CD8-positive, alpha-beta T cell (primary cell): ENCODE measurements at regions of chr17 and their contacts with region 1.

Region 1: DNA sequence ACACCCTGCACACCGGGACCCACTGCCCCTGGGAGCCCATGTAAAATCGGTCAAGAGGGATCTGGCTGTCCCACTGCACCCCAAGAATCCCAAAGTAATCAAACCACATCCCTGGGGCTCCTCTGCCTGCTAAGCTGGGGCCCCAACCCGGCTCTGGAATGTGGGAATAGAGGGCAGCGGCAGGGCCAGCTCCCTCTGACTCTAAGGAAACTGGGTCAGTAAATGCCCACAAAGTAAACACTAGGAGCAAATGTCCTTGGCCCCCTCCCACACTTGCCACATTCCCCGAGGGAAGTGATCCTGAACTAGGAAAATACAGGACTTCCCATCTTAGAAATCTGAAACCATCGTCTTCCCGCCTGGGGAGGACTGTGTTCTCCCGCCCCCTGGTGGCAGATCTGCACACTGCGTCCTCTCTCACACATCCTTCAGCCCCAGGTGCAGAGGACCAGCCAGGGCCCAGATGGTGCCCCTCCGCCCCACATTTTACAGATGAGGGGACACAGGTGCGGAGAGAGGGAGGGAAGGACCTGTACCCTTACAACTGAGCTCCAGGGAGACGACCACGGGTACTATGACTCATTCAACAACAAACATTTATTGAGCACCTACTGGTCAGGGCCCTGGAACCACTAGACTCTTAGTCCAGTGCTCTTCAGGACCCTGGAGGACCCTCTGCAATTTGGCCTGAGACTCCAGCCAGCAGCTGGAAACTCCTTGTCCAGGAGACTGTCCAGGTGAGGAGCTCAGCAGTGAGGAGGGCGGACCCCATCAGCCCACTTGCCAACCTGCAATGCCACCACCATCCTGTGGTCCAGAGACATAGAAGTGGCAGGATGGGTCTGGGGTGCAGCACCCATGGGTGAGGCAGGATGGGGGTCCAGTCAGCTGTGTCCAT is 10.1 kb downstream of the P3H4 start:
- DNase-seq: peak; percentile 47 to 86 (median 76)
- ATAC-seq: peak; percentile 96
- H3K4me3 ChIP-seq: no peak overlapping the region
- H3K4me3 Mint-ChIP-seq: no peak overlapping the region
- H3K27ac ChIP-seq: no peak overlapping the region
- H3K27ac Mint-ChIP-seq: no peak overlapping the region
- H3K4me1 ChIP-seq: peaks cover 5% of the 10 kb centered on the region
- H3K4me1 Mint-ChIP-seq: peaks cover 4% of the 10 kb centered on the region
- H3K27me3 ChIP-seq: no peaks in the 10 kb centered on the region
- H3K27me3 Mint-ChIP-seq: peaks cover 3% of the 10 kb centered on the region
- CTCF ChIP-seq: peak; percentile 93

Region 2: DNA sequence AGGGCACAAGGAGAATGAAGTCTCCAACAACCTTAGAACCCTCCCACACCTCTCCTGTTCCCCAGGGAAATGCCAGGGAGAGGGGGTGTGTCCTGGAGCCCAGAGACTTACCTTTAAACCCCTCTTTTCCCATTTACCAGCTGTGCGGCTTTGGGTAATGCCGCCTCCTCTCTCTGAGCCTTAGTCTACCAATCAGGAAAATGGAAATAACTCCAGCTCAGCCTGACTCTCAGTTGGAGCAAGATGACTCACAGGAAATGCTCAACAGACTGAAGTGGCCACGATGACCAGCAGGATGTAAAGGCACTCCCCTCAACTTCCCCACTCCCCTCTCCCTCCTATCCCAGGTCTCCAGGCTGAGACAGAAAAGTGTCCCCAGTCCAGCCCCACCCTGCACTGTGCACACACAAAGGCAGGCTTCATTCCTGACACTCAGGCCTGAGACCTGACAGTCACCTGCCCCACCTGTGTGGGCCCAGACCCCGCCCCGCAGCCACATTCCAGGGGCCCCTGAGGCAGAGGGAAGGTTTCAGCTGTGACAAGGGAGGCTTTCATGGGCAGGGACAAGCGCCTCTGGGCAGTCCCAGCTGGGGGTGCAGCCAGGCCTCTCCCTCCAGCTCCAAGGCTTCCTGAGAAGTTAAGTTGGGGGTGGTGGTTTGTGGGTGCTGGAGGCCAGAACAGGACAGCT is 279.9 kb before region 1 on chr17:
- CTCF ChIA-PET with region 1: no interaction called
- POLR2A ChIA-PET with region 1: no interaction called
- intact Hi-C with region 1: no loop called
- DNase-seq: no peak
- ATAC-seq: no peak
- H3K4me3 ChIP-seq: no peak overlapping the region
- H3K4me3 Mint-ChIP-seq: no peak overlapping the region
- H3K27ac ChIP-seq: no peak overlapping the region
- H3K27ac Mint-ChIP-seq: no peak overlapping the region
- H3K4me1 ChIP-seq: no peaks in the 10 kb centered on the region
- H3K4me1 Mint-ChIP-seq: no peaks in the 10 kb centered on the region
- H3K27me3 ChIP-seq: peaks cover 0 to 6% of the 10 kb centered on the region in 2 experiments
- H3K27me3 Mint-ChIP-seq: peaks cover 12% of the 10 kb centered on the region
- CTCF ChIP-seq: no peak

Region 3: DNA sequence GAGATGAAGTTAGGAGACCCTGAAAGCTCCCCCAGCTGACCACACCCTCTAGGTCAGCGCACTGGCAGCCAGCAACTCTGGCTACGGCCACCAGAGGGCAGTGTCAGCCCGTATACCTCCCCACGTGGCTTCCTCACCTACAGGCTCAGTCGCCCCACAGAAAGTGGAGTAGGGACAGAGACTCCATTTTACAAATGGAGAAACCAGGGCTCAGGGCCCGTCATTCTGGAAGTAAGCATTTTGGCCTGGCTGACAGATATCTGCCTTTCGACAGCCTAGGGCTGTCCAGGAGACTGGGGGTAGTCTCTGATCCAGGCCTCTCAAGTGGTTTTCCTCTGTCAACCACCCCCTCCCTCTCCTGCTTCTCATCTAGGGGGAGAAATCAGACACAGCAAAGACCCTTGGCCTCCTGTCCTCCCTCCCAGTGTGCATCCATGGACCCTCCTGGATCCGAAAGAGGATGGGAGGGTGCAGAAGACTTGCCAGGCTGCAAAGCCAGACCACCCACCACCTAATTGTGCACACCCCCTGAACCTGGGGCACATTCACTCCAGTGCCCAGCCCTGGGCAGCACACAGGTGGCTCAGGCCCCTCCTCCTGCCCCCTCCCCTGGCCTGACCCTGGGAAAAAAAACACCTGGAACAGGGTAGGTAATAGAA is 63.4 kb before region 1 on chr17:
- CTCF ChIA-PET with region 1: interaction called, 60 read pairs
- POLR2A ChIA-PET with region 1: no interaction called
- intact Hi-C with region 1: loop called (anchors 1 kb)
- DNase-seq: peak; percentile 57 to 87 (median 77)
- ATAC-seq: peak; percentile 97
- H3K4me3 ChIP-seq: no peak overlapping the region
- H3K4me3 Mint-ChIP-seq: no peak overlapping the region
- H3K27ac ChIP-seq: no peak overlapping the region
- H3K27ac Mint-ChIP-seq: no peak overlapping the region
- H3K4me1 ChIP-seq: peaks cover 10% of the 10 kb centered on the region
- H3K4me1 Mint-ChIP-seq: peaks cover 5% of the 10 kb centered on the region
- H3K27me3 ChIP-seq: peaks cover 9 to 31% of the 10 kb centered on the region in 2 experiments
- H3K27me3 Mint-ChIP-seq: peaks cover 27% of the 10 kb centered on the region
- CTCF ChIP-seq: peak; percentile 98

Region 4: DNA sequence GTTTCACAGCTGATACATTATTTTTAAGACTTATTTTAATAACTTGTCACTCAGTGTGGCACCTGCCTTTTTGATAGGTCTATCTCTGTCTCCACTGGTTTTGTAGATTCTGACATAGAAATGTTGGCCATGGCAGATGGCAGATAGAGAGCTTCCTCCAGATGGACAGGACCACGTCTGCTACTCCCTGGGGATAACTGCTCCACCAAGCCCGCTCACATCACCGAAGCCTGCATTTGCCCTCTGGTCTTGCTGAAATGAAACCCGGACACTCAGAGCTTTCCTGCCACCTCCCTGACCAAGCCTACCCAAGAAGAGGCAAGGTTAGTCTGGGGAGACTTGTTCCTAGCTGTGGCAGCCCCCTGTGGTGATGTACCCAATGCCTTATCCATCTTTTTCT is 50.8 kb before region 1 on chr17:
- CTCF ChIA-PET with region 1: interaction called, 15 read pairs
- POLR2A ChIA-PET with region 1: no interaction called
- intact Hi-C with region 1: no loop called
- DNase-seq: no peak
- ATAC-seq: no peak
- H3K4me3 ChIP-seq: no peak overlapping the region
- H3K4me3 Mint-ChIP-seq: no peak overlapping the region
- H3K27ac ChIP-seq: no peak overlapping the region
- H3K27ac Mint-ChIP-seq: no peak overlapping the region
- H3K4me1 ChIP-seq: no peaks in the 10 kb centered on the region
- H3K4me1 Mint-ChIP-seq: no peaks in the 10 kb centered on the region
- H3K27me3 ChIP-seq: no peaks in the 10 kb centered on the region
- H3K27me3 Mint-ChIP-seq: peaks cover 10% of the 10 kb centered on the region
- CTCF ChIP-seq: no peak

Region 5: GRCh38 chr17:41777574-41778188 is 23.9 kb before region 1 on chr17:
- CTCF ChIA-PET with region 1: interaction called, 11 read pairs
- POLR2A ChIA-PET with region 1: no interaction called
- intact Hi-C with region 1: no loop called
- DNase-seq: no peak
- ATAC-seq: no peak
- H3K4me3 ChIP-seq: no peak overlapping the region
- H3K4me3 Mint-ChIP-seq: no peak overlapping the region
- H3K27ac ChIP-seq: no peak overlapping the region
- H3K27ac Mint-ChIP-seq: no peak overlapping the region
- H3K4me1 ChIP-seq: no peaks in the 10 kb centered on the region
- H3K4me1 Mint-ChIP-seq: no peaks in the 10 kb centered on the region
- H3K27me3 ChIP-seq: peaks cover 0 to 2% of the 10 kb centered on the region in 2 experiments
- H3K27me3 Mint-ChIP-seq: peaks cover 11% of the 10 kb centered on the region
- CTCF ChIP-seq: no peak

Region 6: DNA sequence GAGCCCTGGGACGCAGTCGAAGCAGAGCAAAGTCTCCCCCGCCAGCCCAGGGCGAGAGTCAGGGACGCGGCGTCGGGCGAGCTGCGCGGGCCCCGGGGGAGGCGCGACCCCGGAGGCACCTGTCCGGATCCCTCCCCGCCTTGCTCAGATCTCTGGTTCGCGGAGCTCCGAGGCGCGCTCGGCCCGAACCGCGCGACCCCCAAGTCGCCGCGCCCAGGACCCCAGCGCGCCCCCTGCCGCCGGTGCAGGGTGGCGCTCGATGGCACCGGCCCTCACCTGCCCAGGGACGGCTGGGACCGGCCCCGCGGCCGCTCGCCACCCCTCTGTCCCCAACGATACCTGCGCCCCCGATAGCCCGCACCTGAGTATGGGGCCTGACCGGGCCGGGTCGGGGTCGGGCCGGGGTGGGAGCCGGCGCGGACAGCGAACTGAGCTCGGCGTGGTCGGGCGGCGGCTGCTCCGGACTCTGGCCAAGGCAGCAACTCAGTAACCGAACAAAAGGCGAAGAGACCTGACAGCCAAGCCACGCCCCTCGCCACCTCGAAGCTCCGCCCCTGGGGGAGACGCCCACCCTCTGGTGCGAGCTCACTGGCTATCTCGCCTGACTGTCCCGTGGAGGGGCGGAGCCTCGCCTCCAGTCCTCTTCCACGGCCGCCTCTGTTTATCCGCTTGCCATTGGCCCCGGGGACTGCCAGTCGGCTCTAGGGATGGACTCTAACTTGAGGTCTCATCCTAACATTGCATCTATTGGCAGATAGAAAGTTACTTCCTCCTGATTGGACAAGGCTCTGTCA is 15.2 kb before region 1 on chr17 and contains the start of gene JUP:
- CTCF ChIA-PET with region 1: interaction called, 21 read pairs
- POLR2A ChIA-PET with region 1: no interaction called
- intact Hi-C with region 1: no loop called
- DNase-seq: peak; percentile 69 to 92 (median 88)
- ATAC-seq: peak; percentile 93
- H3K4me3 ChIP-seq: peak within 1 kb of the TSS; percentile 33 to 49
- H3K4me3 Mint-ChIP-seq: peak within 1 kb of the TSS; percentile 80
- H3K27ac ChIP-seq: no peak within 1 kb of the TSS
- H3K27ac Mint-ChIP-seq: no peak within 1 kb of the TSS
- H3K4me1 ChIP-seq: peaks cover 25% of the 10 kb centered on the region
- H3K4me1 Mint-ChIP-seq: peaks cover 36% of the 10 kb centered on the region
- H3K27me3 ChIP-seq: peaks cover 10 to 26% of the 10 kb centered on the region in 2 experiments
- H3K27me3 Mint-ChIP-seq: peaks cover 32% of the 10 kb centered on the region
- CTCF ChIP-seq: peak; percentile 27
- total RNA-seq, gene JUP: 1.0 to 1.8 TPM

Region 7: GRCh38 chr17:41811549-41812380 is 10.1 kb after region 1 on chr17 and contains the start of gene P3H4:
- CTCF ChIA-PET with region 1: interaction called, 34 read pairs
- POLR2A ChIA-PET with region 1: interaction called, 3 read pairs
- intact Hi-C with region 1: no loop called
- DNase-seq: peak; percentile 51 to 89 (median 75)
- ATAC-seq: peak; percentile 87
- H3K4me3 ChIP-seq: peak within 1 kb of the TSS; percentile 73 to 93
- H3K4me3 Mint-ChIP-seq: peak within 1 kb of the TSS; percentile 93
- H3K27ac ChIP-seq: peak within 1 kb of the TSS in 1 of 2 experiments; percentile 35
- H3K27ac Mint-ChIP-seq: peak within 1 kb of the TSS; percentile 55
- H3K4me1 ChIP-seq: peaks cover 26% of the 10 kb centered on the region
- H3K4me1 Mint-ChIP-seq: peaks cover 23% of the 10 kb centered on the region
- H3K27me3 ChIP-seq: no peaks in the 10 kb centered on the region
- H3K27me3 Mint-ChIP-seq: peaks cover 2% of the 10 kb centered on the region
- CTCF ChIP-seq: peak; percentile 51
- total RNA-seq, gene P3H4: 0.89 to 1.0 TPM

Region 8: DNA sequence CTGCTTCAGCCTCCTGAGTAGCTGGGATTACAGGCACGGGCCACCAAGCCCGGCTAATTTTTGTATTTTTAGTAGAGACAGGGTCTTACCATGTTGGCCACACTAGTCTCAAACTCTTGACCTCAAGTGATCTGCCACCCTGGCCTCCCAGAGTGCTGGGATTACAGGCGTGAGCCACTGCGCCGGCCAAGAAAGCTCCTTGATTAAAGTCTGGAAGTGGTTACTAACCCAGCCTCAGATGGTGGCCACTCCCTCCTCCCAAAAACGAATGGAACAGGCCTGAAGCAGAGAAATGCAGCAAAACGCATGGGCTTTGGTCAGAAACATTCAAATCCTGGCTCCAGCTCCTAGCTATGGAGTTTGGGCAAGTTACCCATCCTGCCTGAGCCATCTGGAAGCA is 22.5 kb after region 1 on chr17:
- CTCF ChIA-PET with region 1: interaction called, 16 read pairs
- POLR2A ChIA-PET with region 1: no interaction called
- intact Hi-C with region 1: no loop called
- DNase-seq: no peak
- ATAC-seq: no peak
- H3K4me3 ChIP-seq: no peak overlapping the region
- H3K4me3 Mint-ChIP-seq: no peak overlapping the region
- H3K27ac ChIP-seq: no peak overlapping the region
- H3K27ac Mint-ChIP-seq: no peak overlapping the region
- H3K4me1 ChIP-seq: no peaks in the 10 kb centered on the region
- H3K4me1 Mint-ChIP-seq: no peaks in the 10 kb centered on the region
- H3K27me3 ChIP-seq: no peaks in the 10 kb centered on the region
- H3K27me3 Mint-ChIP-seq: no peaks in the 10 kb centered on the region
- CTCF ChIP-seq: no peak

Region 9: DNA sequence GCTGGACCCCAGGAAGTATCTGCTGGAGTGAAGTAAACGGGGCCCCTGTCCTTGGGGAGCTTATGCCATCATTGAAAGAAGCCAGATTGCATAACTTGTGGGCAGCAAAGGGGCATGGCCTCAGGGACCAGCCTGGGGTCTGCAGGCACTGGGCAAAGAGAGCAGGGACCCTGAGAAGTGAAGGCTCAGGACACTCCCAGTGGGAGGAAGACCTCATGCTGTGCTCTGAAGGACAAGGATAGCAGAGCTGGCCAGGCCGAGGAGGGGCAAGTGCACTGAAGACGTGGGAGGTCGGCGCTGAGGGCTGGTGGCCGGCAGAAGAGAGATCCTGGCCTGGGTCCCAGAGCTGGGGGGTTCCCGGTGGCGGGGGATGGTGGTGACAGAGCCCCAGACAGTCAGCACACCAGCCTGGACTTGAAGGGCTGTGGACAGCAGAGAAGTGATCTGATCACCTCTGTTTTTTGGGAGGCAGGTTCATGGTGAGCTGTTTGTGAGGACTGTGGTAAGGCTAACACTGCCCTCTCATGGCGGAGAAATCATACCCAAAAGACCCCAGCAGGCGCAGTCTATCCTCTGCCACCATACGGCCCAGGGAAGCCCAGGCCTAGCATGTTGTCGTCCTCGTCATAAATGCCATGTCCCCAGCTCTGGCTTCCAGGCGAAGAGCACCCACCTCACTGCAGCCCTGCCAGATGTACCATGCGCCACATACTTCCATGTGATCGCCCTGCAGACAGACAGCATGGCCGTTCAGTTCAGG is 157.9 kb after region 1 on chr17:
- CTCF ChIA-PET with region 1: no interaction called
- POLR2A ChIA-PET with region 1: no interaction called
- intact Hi-C with region 1: no loop called
- DNase-seq: no peak
- ATAC-seq: no peak
- H3K4me3 ChIP-seq: no peak overlapping the region
- H3K4me3 Mint-ChIP-seq: no peak overlapping the region
- H3K27ac ChIP-seq: no peak overlapping the region
- H3K27ac Mint-ChIP-seq: no peak overlapping the region
- H3K4me1 ChIP-seq: no peaks in the 10 kb centered on the region
- H3K4me1 Mint-ChIP-seq: no peaks in the 10 kb centered on the region
- H3K27me3 ChIP-seq: no peaks in the 10 kb centered on the region
- H3K27me3 Mint-ChIP-seq: no peaks in the 10 kb centered on the region
- CTCF ChIP-seq: no peak